ENCODE measurements at regions of chr17 and their contacts with region 1.

Region 1: DNA sequence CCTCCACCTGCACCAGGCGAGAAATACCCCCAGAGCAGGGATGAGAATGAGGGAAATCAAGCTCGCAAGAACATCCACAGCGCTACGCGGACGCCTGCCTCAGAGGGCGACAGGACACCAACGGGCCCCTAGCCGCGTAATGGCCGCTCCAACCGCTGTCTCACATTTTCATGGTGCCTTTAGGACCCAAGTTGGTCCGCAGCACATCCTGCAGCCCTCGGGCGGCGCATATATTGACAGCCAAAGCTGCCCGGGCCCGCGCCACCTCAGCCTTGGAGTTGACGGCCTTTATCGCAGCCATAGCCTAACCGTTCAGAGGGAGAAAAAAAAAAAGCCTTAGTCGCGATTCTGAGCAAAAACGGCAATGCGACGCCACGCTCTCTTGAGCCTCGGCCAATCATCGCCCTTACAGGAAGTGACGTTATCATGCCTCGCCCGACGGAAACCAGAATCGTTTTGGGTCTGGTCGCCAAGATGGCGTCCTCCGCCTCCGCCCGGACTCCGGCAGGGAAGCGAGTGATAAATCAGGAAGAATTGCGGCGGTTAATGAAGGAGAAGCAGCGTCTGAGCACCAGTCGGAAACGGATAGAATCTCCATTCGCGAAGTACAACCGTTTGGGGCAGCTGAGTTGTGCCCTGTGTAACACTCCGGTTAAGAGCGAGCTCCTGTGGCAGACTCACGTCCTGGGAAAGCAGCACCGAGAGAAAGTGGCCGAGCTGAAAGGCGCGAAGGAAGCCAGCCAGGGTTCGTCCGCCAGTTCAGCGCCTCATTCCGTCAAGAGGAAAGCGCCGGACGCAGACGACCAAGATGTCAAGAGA is at the starts of genes CCT6B and ZNF830:
- DNase-seq: peak; percentile 95
- ATAC-seq: peak; percentile 90
- H3K4me3 ChIP-seq: peak within 1 kb of the TSS; percentile 72 to 98 (median 88)
- H3K4me3 Mint-ChIP-seq: peak within 1 kb of the TSS; percentile 99
- H3K27ac ChIP-seq: peak within 1 kb of the TSS; percentile 85 to 92
- H3K27ac Mint-ChIP-seq: peak within 1 kb of the TSS; percentile 99
- H3K4me1 ChIP-seq: peaks cover 13 to 17% of the 10 kb centered on the region in 2 donors
- H3K4me1 Mint-ChIP-seq: peaks cover 25% of the 10 kb centered on the region
- H3K27me3 ChIP-seq: peaks cover 0 to 7% (median 0%) of the 10 kb centered on the region in 4 experiments
- H3K27me3 Mint-ChIP-seq: peaks cover 10% of the 10 kb centered on the region
- CTCF ChIP-seq: no peak
- total RNA-seq, gene CCT6B: 2.6 and 2.8 TPM in 2 replicates
- total RNA-seq, gene ZNF830: 44.6 and 45.4 TPM in 2 replicates

Region 2: DNA sequence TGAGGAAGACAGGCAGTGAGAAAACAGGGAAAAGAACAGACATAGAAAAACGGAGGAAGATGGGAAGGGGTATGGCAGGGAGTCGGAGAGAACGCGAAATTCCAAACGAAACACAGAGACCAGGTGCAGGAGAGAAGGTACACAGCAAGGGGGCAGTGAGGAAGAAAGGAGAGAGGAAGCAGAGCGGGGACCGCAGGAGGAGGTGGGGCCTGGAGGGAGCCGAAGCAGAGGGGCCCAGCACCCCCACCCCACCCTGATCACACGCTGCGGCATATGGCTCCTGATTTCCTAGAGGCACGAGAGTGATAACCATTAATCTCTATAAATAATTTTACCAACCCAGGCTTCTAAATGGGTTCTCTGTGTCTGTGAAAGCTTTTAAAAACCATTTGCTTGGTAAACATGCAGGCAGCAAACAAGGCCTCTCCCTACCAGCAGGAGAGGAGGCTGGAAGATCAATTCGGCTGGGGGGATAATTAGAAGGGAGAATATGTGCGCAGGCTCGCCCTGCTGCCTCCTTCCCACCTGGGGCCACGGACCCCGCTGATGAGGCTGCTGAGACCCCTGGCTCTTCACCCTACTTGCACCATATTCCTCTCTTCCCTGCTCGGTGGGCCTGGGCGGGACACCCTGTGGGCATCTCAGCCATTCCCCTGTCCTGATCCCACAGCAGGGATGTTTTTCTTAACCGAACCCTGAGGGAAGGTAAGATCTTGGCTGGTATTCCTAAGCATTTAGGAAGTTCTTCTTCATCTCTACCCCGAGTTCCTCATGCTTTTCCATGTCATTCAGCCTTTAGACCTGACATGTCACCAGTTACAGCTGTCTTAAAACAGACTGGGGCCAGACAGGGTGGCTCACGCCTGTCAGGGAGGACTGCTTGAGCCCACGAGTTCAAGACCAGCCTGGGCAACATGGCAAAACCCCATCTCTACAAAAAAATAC is 295.2 kb before region 1 on chr17:
- CTCF ChIA-PET with region 1: no interaction called
- POLR2A ChIA-PET with region 1: no interaction called
- intact Hi-C with region 1: no loop called
- DNase-seq: no peak
- ATAC-seq: no peak
- H3K4me3 ChIP-seq: no peak overlapping the region
- H3K4me3 Mint-ChIP-seq: no peak overlapping the region
- H3K27ac ChIP-seq: no peak overlapping the region
- H3K27ac Mint-ChIP-seq: no peak overlapping the region
- H3K4me1 ChIP-seq: no peaks in the 10 kb centered on the region
- H3K4me1 Mint-ChIP-seq: no peaks in the 10 kb centered on the region
- H3K27me3 ChIP-seq: peaks cover 0 to 6% (median 0%) of the 10 kb centered on the region in 4 experiments
- H3K27me3 Mint-ChIP-seq: peaks cover 50% of the 10 kb centered on the region
- CTCF ChIP-seq: no peak

Region 3: DNA sequence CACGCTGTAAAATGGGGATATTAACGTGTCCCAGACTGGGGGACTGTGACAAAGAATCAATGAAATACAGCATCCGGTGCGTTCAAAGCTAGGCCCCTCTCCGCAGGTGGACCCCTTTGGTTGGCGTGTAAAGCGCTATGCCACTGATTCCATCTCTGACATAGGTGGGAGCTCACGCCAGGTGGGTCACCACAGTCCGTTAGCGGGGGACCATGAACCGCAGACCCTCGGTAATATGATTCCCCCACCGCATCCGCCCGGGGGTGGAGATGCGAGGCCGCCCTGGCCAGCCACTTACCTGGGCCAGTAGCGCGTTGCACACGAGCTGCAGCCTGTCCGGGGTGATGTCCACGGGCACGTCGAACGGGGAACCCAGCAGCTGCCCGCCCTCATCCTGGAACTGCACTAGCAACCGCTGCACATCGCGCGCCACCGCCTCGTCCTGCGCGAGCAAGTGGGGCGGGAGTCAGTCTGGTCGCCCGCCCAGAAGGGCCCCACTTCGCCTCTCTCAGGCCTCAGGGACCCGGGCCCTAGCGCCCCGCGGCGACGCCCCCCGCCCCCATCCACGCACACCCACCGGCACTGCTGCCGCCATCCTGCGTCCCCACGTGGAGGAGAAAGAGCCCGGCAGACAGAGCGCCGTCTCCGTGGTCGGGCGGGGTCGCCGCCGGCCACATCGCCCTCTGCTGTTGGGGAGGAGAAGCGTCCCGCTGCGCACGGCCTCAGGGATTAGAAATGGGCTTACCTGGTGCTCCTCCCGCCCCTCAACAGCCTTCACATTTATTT is 180.6 kb after region 1 on chr17 and contains the start of gene NLE1:
- CTCF ChIA-PET with region 1: no interaction called
- POLR2A ChIA-PET with region 1: no interaction called
- intact Hi-C with region 1: loop called (anchors 1 kb)
- DNase-seq: peak; percentile 89
- ATAC-seq: peak; percentile 98
- H3K4me3 ChIP-seq: peak within 1 kb of the TSS; percentile 73 to 93 (median 84)
- H3K4me3 Mint-ChIP-seq: peak within 1 kb of the TSS; percentile 87
- H3K27ac ChIP-seq: peak within 1 kb of the TSS in 1 of 2 donors; percentile 64
- H3K27ac Mint-ChIP-seq: peak within 1 kb of the TSS; percentile 56
- H3K4me1 ChIP-seq: peaks cover 5 to 11% of the 10 kb centered on the region in 2 donors
- H3K4me1 Mint-ChIP-seq: peaks cover 20% of the 10 kb centered on the region
- H3K27me3 ChIP-seq: no peaks in the 10 kb centered on the region
- H3K27me3 Mint-ChIP-seq: no peaks in the 10 kb centered on the region
- CTCF ChIP-seq: peak; percentile 95
- total RNA-seq, gene NLE1: 13.7 and 17.5 TPM in 2 replicates

Measured in B cell (primary cell).